CD8-positive, alpha-beta T cell (primary cell): ENCODE measurements at regions of chr5 and their contacts with region 1.

Region 1: GRCh38 chr5:151213800-151214613 is 9.9 kb downstream of the CCDC69 start:
- DNase-seq: peak; percentile 67 to 95 (median 89)
- ATAC-seq: peak; percentile 80
- H3K4me3 ChIP-seq: peak overlapping the region; percentile 57 to 61
- H3K4me3 Mint-ChIP-seq: peak overlapping the region; percentile 83
- H3K27ac ChIP-seq: peak overlapping the region; percentile 70 to 86
- H3K27ac Mint-ChIP-seq: peak overlapping the region; percentile 96
- H3K4me1 ChIP-seq: peaks cover 91% of the 10 kb centered on the region
- H3K4me1 Mint-ChIP-seq: peaks cover 86% of the 10 kb centered on the region
- H3K27me3 ChIP-seq: no peaks in the 10 kb centered on the region
- H3K27me3 Mint-ChIP-seq: no peaks in the 10 kb centered on the region
- CTCF ChIP-seq: no peak

Region 2: GRCh38 chr5:150209020-150209635 is 1004.9 kb before region 1 on chr5:
- CTCF ChIA-PET with region 1: no interaction called
- POLR2A ChIA-PET with region 1: no interaction called
- intact Hi-C with region 1: no loop called
- DNase-seq: peak in 8 of 9 experiments; percentile 16 to 73 (median 42)
- ATAC-seq: peak; percentile 77
- H3K4me3 ChIP-seq: peak overlapping the region; percentile 33 to 49
- H3K4me3 Mint-ChIP-seq: peak overlapping the region; percentile 60
- H3K27ac ChIP-seq: no peak overlapping the region
- H3K27ac Mint-ChIP-seq: no peak overlapping the region
- H3K4me1 ChIP-seq: peaks cover 42% of the 10 kb centered on the region
- H3K4me1 Mint-ChIP-seq: peaks cover 37% of the 10 kb centered on the region
- H3K27me3 ChIP-seq: peaks cover 0 to 3% of the 10 kb centered on the region in 2 experiments
- H3K27me3 Mint-ChIP-seq: peaks cover 6% of the 10 kb centered on the region
- CTCF ChIP-seq: no peak

Region 3: DNA sequence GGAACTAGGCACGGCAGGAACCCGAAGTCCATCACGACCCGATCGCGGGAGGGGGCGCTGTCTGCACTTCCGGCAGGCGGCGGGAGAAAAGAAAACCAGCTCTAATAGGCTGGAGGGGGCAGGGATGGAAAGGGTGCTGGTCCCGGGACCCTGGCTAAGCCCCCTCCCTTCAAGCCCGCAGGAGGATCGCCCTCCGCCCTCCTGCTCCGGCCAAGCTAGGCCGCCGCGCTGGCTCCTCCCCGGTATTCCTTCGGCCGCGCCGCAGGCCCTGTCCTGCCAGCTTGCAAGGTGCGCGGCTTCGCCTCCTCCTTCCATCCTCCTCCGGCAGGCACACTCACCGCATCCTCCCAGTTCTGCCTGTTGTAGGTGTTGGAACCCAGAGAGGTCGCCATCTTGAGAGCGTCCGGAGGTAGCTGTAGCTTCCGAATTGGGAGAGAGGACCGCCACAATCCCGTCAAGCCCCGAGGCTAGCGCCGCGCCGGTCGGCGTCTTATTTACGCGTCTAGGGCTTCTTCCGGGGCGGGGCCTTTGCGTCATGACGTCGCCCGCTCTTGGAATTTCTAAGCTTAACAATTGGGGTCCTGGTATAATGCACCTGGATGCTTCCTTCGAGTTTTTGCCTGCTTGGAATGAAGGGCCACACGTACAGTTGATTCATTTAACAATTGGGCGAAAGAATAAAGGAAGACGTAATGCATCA is 513.3 kb before region 1 on chr5 and contains the start of gene RBM22:
- CTCF ChIA-PET with region 1: no interaction called
- POLR2A ChIA-PET with region 1: interaction called, 8 read pairs
- intact Hi-C with region 1: loop called in 1 of 2 experiments (anchors 1 kb)
- DNase-seq: peak; percentile 82 to 96 (median 94)
- ATAC-seq: peak; percentile 90
- H3K4me3 ChIP-seq: peak within 1 kb of the TSS; percentile 80 to 81
- H3K4me3 Mint-ChIP-seq: no peak within 1 kb of the TSS
- H3K27ac ChIP-seq: peak within 1 kb of the TSS; percentile 94 to 97
- H3K27ac Mint-ChIP-seq: no peak within 1 kb of the TSS
- H3K4me1 ChIP-seq: peaks cover 19% of the 10 kb centered on the region
- H3K4me1 Mint-ChIP-seq: peaks cover 2% of the 10 kb centered on the region
- H3K27me3 ChIP-seq: no peaks in the 10 kb centered on the region
- H3K27me3 Mint-ChIP-seq: no peaks in the 10 kb centered on the region
- CTCF ChIP-seq: peak; percentile 85
- total RNA-seq, gene RBM22: 119 to 125 TPM

Region 4: GRCh38 chr5:151126199-151126645 is 87.8 kb before region 1 on chr5:
- CTCF ChIA-PET with region 1: interaction called, 13 read pairs
- POLR2A ChIA-PET with region 1: no interaction called
- intact Hi-C with region 1: no loop called
- DNase-seq: peak; percentile 34 to 82 (median 66)
- ATAC-seq: peak; percentile 37
- H3K4me3 ChIP-seq: no peak overlapping the region
- H3K4me3 Mint-ChIP-seq: no peak overlapping the region
- H3K27ac ChIP-seq: peak overlapping the region; percentile 12 to 54
- H3K27ac Mint-ChIP-seq: peak overlapping the region; percentile 92
- H3K4me1 ChIP-seq: peaks cover 41% of the 10 kb centered on the region
- H3K4me1 Mint-ChIP-seq: peaks cover 54% of the 10 kb centered on the region
- H3K27me3 ChIP-seq: no peaks in the 10 kb centered on the region
- H3K27me3 Mint-ChIP-seq: no peaks in the 10 kb centered on the region
- CTCF ChIP-seq: peak; percentile 78

Region 5: DNA sequence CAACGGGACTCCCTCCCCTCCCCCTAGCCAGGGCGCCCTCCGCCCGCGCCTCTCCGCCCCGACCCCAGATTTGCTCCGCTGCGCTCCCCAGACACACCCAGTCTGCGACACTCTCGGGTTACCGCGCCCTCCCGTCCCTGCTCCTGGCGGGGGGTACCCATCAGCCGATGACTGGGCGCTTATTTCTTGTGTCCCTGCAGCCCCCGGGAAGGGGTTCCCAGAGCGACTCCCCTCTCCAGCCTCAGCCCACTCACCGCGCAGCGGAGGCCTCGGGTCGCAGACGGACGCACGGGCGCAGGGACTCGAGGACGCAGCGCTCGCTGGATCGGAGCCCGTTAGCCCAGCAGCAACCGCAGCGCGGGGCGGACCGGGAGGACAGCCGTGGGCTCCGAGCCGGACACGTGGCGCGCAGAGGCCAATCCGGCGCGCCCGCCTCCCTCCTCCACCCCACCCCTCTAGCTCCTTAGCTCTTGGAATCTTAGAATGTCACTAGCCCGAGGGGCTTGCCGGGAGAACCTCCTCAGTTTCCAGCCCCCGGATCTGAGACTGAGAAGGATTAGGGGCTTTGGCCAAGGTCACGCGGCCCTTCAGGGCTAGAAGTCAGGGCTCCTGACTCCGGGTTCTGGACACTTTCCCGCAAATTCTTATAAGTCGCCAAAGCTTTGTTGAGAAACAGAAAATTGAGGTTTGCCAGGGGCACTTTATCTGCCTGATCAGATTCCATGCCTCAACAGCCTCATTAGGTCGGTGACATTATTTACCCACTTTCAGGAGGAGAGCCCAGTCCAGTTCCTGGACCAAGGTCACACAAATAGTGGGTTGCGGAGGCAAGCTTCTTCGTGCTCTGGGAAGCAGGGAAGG is 56.4 kb before region 1 on chr5 and contains the start of gene ANXA6:
- CTCF ChIA-PET with region 1: interaction called, 3 read pairs
- POLR2A ChIA-PET with region 1: no interaction called
- intact Hi-C with region 1: loop called in 1 of 2 experiments (anchors 5 kb)
- DNase-seq: peak in 8 of 9 experiments; percentile 50 to 86 (median 66)
- ATAC-seq: peak; percentile 70
- H3K4me3 ChIP-seq: peak within 1 kb of the TSS; percentile 52 to 94
- H3K4me3 Mint-ChIP-seq: peak within 1 kb of the TSS; percentile 97
- H3K27ac ChIP-seq: peak within 1 kb of the TSS; percentile 68 to 90
- H3K27ac Mint-ChIP-seq: peak within 1 kb of the TSS; percentile 95
- H3K4me1 ChIP-seq: peaks cover 43% of the 10 kb centered on the region
- H3K4me1 Mint-ChIP-seq: peaks cover 65% of the 10 kb centered on the region
- H3K27me3 ChIP-seq: no peaks in the 10 kb centered on the region
- H3K27me3 Mint-ChIP-seq: no peaks in the 10 kb centered on the region
- CTCF ChIP-seq: no peak
- total RNA-seq, gene ANXA6: 83.5 to 89.4 TPM

Region 6: DNA sequence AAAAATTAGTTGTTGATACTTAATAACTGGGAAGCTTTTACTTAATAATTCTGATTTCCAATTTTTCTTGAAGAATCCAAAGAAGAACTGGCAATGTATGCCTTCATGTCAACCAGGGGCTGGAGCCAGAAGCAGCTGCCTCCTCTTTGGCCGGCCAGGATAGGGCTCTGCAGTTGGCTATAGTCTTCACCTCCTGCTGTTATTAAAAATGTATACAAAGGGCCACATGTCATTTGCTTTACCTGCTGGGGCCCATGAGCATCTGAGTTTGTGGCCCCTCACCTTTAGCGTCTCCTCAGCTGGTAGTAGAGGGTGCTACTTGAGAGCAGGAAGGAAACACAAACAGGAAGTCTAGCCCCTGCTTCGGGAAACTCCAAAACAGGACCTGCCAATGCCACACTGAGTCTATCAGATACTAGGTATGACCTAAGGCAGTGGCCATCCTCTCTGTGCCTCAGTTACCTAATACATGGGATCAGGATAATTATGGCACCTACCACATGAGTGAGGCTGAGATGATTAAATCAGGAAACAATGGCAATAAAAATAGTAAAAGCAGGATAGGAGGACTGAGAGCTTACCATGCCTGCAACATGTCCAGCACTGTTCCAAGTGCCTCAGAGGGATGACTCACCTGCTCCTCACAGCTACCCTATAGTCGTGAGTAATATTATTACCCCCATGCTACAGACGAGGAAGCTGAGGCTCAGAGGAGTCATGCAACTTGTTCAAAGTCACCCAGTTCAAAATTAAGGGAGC is 11.4 kb before region 1 on chr5:
- CTCF ChIA-PET with region 1: interaction called, 4 read pairs
- POLR2A ChIA-PET with region 1: interaction called, 12 read pairs
- intact Hi-C with region 1: loop called in 1 of 2 experiments (anchors 1 kb)
- DNase-seq: peak in 6 of 9 experiments; percentile 33 to 79 (median 48)
- ATAC-seq: peak; percentile 84
- H3K4me3 ChIP-seq: no peak overlapping the region
- H3K4me3 Mint-ChIP-seq: peak overlapping the region; percentile 47
- H3K27ac ChIP-seq: peak overlapping the region in 1 of 2 experiments; percentile 70
- H3K27ac Mint-ChIP-seq: peak overlapping the region; percentile 90
- H3K4me1 ChIP-seq: peaks cover 32% of the 10 kb centered on the region
- H3K4me1 Mint-ChIP-seq: peaks cover 35% of the 10 kb centered on the region
- H3K27me3 ChIP-seq: no peaks in the 10 kb centered on the region
- H3K27me3 Mint-ChIP-seq: no peaks in the 10 kb centered on the region
- CTCF ChIP-seq: no peak

Region 7: GRCh38 chr5:151492729-151493128 is 278.7 kb after region 1 on chr5:
- CTCF ChIA-PET with region 1: no interaction called
- POLR2A ChIA-PET with region 1: no interaction called
- intact Hi-C with region 1: no loop called
- DNase-seq: no peak
- ATAC-seq: no peak
- H3K4me3 ChIP-seq: no peak overlapping the region
- H3K4me3 Mint-ChIP-seq: no peak overlapping the region
- H3K27ac ChIP-seq: no peak overlapping the region
- H3K27ac Mint-ChIP-seq: no peak overlapping the region
- H3K4me1 ChIP-seq: no peaks in the 10 kb centered on the region
- H3K4me1 Mint-ChIP-seq: no peaks in the 10 kb centered on the region
- H3K27me3 ChIP-seq: no peaks in the 10 kb centered on the region
- H3K27me3 Mint-ChIP-seq: no peaks in the 10 kb centered on the region
- CTCF ChIP-seq: no peak